Heart left ventricle (tissue), 16 donors: ENCODE measurements at regions of chr17 and their contacts with region 1.

Region 1: GRCh38 chr17:81898141-81898866 is 3.7 kb upstream of the NPB start:
- DNase-seq: peak in 1 of 5 donors; percentile 41
- ATAC-seq: no peak
- H3K4me3 ChIP-seq: no peak overlapping the region
- H3K27ac ChIP-seq: no peak overlapping the region
- H3K4me1 ChIP-seq: peaks cover 0 to 15% (median 7%) of the 10 kb centered on the region in 12 donors
- H3K27me3 ChIP-seq: peaks cover 0 to 19% (median 0%) of the 10 kb centered on the region in 9 donors
- CTCF ChIP-seq: no peak
- POLR2A ChIP-seq: no peak

Region 2: DNA sequence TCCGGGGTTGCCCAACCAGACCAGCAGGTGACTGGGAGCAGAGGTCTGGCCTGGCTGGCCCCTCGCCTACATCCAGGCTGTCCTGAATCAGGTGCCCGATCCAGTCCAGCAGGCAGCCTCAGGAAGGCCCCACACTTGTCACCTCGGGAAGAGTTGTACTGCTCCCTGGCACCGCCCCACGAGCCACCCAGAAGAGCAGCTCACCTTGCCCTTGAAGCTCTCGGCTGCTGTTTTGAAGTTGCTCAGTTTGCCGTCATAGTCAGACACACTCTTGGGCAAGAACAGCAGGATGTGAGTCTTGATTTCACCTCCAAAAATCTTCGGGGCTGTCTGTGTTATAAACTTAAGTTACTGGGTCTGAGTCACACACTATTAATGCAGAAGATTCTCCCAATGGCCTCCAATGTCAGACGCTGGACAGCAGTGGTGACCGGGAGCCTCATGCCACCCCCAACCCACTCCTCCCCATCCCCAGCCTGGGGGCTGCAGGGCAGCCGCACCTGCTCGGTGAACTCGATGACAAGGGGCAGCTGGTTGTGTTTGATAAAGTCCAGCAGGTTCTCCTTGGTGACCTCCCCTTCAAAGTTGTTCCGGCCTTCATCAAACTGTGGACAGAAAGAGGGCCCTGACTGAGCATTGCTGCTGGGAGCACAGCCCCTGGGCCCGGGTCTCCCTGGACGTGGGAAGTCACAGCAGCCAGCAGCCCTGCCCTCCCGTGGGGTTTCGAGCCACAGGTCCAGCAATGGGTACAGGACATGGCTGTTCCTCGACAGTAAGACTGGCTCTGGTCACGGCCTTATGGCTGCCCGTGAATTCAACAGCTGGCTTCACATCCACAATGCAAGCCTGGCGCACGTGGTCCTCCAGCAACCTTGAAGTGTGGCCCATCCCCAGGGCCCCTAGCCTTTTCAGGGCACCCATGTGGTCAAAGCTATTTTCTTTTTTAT is 51.3 kb before region 1 on chr17:
- intact Hi-C with region 1: loop called in 1 of 10 experiments (anchors 5 kb)
- DNase-seq: no peak
- ATAC-seq: no peak
- H3K4me3 ChIP-seq: no peak overlapping the region
- H3K27ac ChIP-seq: no peak overlapping the region
- H3K4me1 ChIP-seq: no peaks in the 10 kb centered on the region
- H3K27me3 ChIP-seq: no peaks in the 10 kb centered on the region
- CTCF ChIP-seq: no peak
- POLR2A ChIP-seq: no peak

Region 3: DNA sequence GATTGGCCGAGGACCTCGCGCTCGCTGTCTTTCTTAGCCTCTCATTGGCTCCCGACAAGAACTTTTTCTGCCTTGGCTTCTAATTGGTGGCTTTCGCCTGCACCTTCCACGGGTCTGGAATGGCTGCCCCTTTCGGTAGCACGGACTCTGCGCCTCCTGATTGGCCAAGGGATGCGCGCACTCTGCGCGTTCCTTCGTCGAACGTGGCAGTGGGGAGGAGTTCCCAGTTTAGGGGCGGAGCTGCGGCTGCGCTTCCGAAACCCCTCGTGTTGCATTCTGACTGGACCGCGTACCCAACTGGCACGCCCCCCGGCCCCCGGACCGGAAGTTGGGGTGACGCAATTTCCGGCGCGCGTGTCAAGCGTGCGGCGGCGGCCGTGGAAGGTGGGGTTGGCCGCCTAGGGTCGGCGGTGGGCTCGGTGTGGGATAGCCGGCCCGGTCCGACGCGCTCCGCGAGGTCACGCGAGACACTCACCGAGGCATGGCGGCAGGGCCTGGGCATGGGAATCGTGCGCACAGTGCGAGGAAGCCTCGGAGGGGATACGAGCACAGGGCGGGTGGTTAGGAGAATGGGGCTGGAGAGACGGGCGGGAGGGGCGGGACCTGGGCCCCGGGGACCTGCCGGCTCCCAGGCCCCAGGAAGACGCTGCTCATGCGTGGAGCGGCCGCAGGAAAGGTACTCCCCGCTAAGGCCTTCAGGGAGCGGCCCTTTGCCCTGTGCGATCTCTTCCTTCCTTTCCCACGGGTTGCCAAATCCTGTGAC is 37.4 kb before region 1 on chr17:
- intact Hi-C with region 1: no loop called
- DNase-seq: peak; percentile 99 to 100 (median 99)
- ATAC-seq: peak; percentile 94 to 99 (median 98)
- H3K4me3 ChIP-seq: peak overlapping the region; percentile 54 to 99 (median 81)
- H3K27ac ChIP-seq: peak overlapping the region; percentile 75 to 99 (median 95)
- H3K4me1 ChIP-seq: peaks cover 11 to 60% (median 42%) of the 10 kb centered on the region in 12 donors
- H3K27me3 ChIP-seq: no peaks in the 10 kb centered on the region
- CTCF ChIP-seq: peak in 6 of 12 donors; percentile 8 to 32 (median 18)
- POLR2A ChIP-seq: peak; percentile 77 to 86

Region 4: GRCh38 chr17:81948635-81949378 is 50.5 kb after region 1 on chr17:
- intact Hi-C with region 1: no loop called
- DNase-seq: peak in 1 of 5 donors; percentile 44
- ATAC-seq: peak in 3 of 4 donors; percentile 9 to 17 (median 15)
- H3K4me3 ChIP-seq: no peak overlapping the region
- H3K27ac ChIP-seq: no peak overlapping the region
- H3K4me1 ChIP-seq: no peaks in the 10 kb centered on the region
- H3K27me3 ChIP-seq: peaks cover 0 to 7% (median 0%) of the 10 kb centered on the region in 9 donors
- CTCF ChIP-seq: no peak
- POLR2A ChIP-seq: no peak